ENCODE measurements at regions of chr10 and their contacts with region 1.

Region 1: DNA sequence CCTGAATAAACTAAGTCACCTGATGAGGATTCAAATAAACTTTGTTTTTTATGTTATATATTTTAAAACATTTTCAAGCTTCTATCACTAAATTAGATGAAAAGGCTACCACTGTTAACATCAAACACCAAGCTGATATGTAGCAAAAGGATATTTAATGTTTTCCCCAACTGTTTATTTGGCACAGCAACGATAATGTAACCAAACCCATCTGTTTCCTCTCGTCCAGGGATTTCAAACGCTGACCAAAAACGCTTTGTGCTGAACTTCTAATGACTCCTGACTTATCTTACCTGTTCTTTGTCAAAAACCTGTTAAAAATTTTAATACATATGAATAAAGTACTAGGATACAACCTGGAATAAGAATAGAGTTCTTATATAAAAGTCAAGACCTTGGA is 30.5 kb downstream of the DCLRE1A start:
- DNase-seq: no peak
- ATAC-seq: no peak
- H3K4me3 ChIP-seq: no peak overlapping the region
- H3K4me3 Mint-ChIP-seq: no peak overlapping the region
- H3K27ac ChIP-seq: no peak overlapping the region
- H3K27ac Mint-ChIP-seq: no peak overlapping the region
- H3K4me1 ChIP-seq: no peaks in the 10 kb centered on the region
- H3K4me1 Mint-ChIP-seq: no peaks in the 10 kb centered on the region
- H3K27me3 ChIP-seq: peaks cover 0 to 10% of the 10 kb centered on the region in 2 experiments
- H3K27me3 Mint-ChIP-seq: peaks cover 2 to 10% of the 10 kb centered on the region in 2 donors

Region 2: GRCh38 chr10:114384181-114384580 is 560.8 kb after region 1 on chr10:
- CTCF ChIA-PET with region 1: interaction called in 1 of 2 experiments, 18 read pairs
- POLR2A ChIA-PET with region 1: no interaction called
- DNase-seq: no peak
- ATAC-seq: no peak
- H3K4me3 ChIP-seq: no peak overlapping the region
- H3K4me3 Mint-ChIP-seq: no peak overlapping the region
- H3K27ac ChIP-seq: no peak overlapping the region
- H3K27ac Mint-ChIP-seq: no peak overlapping the region
- H3K4me1 ChIP-seq: no peaks in the 10 kb centered on the region
- H3K4me1 Mint-ChIP-seq: no peaks in the 10 kb centered on the region
- H3K27me3 ChIP-seq: peaks cover 0 to 19% of the 10 kb centered on the region in 2 experiments
- H3K27me3 Mint-ChIP-seq: peaks cover 14 to 15% of the 10 kb centered on the region in 2 donors